ENCODE measurements at regions of chr4 and their contacts with region 1.

Region 1: DNA sequence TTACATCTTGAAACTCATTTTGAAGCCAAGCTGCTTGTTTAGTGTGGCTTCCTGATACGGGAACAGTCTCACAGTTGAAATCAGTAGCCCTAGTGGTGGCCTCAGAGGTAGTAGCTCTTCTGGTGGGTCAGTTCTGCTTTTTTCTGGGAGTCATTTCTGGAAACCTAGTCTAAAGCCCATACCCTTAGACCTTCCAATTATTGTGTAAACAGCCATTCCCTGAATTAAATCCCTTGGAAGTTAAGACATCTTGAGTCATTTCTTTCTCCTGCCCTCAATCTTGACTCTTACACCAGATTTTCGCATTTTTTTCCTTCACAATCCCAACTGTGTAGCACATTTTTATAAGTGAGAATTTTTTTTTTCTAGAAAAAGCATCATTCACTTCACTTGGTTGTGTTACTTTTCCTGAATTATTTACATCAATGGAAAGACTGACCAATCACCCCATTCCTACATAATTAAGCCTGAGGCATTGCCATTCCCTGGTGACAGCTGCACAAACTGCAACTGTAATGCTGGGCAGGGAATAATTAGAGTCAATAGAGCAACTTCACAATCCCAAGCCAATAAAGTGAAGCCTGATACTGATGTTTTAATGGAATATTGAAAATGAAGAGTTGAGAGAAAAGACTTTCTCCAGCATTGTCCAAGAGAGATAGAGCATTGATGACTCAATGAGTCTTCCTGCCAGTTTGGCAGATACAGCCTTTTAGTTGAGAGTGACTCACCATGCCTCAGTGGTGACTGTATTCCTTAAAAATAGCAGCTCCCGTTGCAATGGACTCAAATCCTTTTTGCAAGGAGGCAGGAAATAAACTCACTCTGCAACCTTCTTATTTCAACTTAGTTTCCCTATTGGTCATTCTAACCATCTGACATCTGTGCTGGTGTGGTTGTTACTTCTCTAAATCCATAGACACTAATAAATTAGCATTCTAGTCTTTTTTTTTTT is 13.0 kb upstream of the SEPSECS start:
- DNase-seq: no peak
- H3K4me3 ChIP-seq: no peak overlapping the region
- H3K27ac ChIP-seq: no peak overlapping the region
- H3K4me1 ChIP-seq: no peaks in the 10 kb centered on the region
- H3K27me3 ChIP-seq: no peaks in the 10 kb centered on the region
- CTCF ChIP-seq: no peak
- POLR2A ChIP-seq: no peak

Region 2: DNA sequence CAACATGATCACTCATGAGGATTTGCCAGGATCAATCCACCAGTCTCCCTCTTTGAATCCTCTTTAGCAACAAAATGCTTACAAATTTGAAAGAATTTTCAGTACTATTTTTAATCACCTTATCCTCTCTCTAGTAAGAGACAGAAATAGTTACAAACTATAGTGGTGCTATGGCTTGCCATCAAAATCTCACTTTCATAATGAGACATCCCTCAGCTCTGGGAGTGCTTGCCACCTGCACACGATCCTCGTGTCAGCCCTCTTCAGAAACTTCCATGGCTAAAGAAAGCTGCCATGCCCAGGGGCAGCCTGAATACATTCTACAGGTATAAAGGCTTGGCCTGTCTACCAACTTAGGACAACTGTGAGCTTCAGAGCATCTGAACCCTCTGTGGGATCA is 583.8 kb before region 1 on chr4:
- intact Hi-C with region 1: loop called (anchors 5 kb)
- DNase-seq: no peak
- H3K4me3 ChIP-seq: no peak overlapping the region
- H3K27ac ChIP-seq: no peak overlapping the region
- H3K4me1 ChIP-seq: no peaks in the 10 kb centered on the region
- H3K27me3 ChIP-seq: no peaks in the 10 kb centered on the region
- CTCF ChIP-seq: no peak
- POLR2A ChIP-seq: no peak

Region 3: GRCh38 chr4:25406081-25406692 is 232.9 kb after region 1 on chr4:
- intact Hi-C with region 1: no loop called
- DNase-seq: no peak
- H3K4me3 ChIP-seq: no peak overlapping the region
- H3K27ac ChIP-seq: no peak overlapping the region
- H3K4me1 ChIP-seq: no peaks in the 10 kb centered on the region
- H3K27me3 ChIP-seq: no peaks in the 10 kb centered on the region
- CTCF ChIP-seq: no peak
- POLR2A ChIP-seq: no peak

Measured in prostate gland (tissue), 2 donors.